ENCODE measurements at regions of chr16 and their contacts with region 1.

Region 1: GRCh38 chr16:57147381-57148221 is 38.2 kb downstream of the PSME3IP1 start:
- DNase-seq: peak in 3 of 5 donors; percentile 43 to 65 (median 47)
- ATAC-seq: peak in 3 of 4 donors; percentile 20 to 71 (median 33)
- H3K4me3 ChIP-seq: peak overlapping the region in 1 of 12 donors; percentile 6
- H3K27ac ChIP-seq: peak overlapping the region in 11 of 12 donors; percentile 27 to 89 (median 68)
- H3K4me1 ChIP-seq: peaks cover 10 to 87% (median 58%) of the 10 kb centered on the region in 12 donors
- H3K27me3 ChIP-seq: no peaks in the 10 kb centered on the region
- CTCF ChIP-seq: no peak
- POLR2A ChIP-seq: no peak

Region 2: DNA sequence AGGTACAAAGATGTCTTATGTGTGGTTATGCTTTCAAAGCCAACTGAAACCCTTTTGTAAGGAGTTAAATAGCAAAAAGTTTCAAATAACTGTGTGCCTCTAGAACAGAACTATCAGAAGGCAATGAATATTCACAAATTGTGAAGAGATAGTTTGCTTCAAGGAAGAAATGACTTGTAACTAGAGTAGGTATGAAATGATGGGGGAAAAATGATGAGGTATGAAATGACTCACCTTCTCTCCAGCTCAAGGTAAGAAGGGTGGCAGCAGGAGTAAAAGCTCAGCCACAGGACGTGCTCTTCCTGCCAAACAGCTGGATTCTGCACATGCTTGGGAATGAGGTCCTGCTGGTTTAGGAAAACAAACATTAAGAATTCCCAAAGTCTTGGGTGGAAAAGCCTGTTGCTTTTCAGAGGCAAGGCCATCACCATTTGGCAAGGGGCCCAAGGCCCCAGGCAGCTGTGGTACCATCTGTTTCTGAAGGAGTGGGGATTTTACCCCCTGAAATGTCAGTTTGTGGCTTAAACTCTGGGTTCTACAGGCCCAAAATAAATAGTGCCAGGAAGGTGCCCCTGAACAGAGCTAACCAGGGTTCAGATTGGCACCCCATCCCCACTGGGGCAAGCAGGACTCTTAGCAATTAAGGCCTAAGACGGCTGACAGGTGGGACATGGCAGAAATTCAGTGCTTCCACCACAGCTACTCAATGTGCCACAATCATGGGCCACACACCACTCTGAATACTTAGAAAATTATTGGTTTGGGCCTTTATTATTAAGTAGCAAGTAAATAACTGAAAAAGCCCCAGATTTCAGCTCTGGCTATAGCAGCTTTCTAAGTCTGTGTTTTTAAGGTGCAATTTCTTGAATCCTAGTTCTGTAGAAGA is 202.4 kb before region 1 on chr16:
- intact Hi-C with region 1: loop called in 1 of 10 experiments (anchors 10 kb)
- DNase-seq: no peak
- ATAC-seq: peak in 1 of 4 donors; percentile 10
- H3K4me3 ChIP-seq: no peak overlapping the region
- H3K27ac ChIP-seq: peak overlapping the region in 1 of 12 donors; percentile 6
- H3K4me1 ChIP-seq: peaks cover 0 to 15% (median 2%) of the 10 kb centered on the region in 12 donors
- H3K27me3 ChIP-seq: no peaks in the 10 kb centered on the region
- CTCF ChIP-seq: no peak
- POLR2A ChIP-seq: no peak

Region 3: DNA sequence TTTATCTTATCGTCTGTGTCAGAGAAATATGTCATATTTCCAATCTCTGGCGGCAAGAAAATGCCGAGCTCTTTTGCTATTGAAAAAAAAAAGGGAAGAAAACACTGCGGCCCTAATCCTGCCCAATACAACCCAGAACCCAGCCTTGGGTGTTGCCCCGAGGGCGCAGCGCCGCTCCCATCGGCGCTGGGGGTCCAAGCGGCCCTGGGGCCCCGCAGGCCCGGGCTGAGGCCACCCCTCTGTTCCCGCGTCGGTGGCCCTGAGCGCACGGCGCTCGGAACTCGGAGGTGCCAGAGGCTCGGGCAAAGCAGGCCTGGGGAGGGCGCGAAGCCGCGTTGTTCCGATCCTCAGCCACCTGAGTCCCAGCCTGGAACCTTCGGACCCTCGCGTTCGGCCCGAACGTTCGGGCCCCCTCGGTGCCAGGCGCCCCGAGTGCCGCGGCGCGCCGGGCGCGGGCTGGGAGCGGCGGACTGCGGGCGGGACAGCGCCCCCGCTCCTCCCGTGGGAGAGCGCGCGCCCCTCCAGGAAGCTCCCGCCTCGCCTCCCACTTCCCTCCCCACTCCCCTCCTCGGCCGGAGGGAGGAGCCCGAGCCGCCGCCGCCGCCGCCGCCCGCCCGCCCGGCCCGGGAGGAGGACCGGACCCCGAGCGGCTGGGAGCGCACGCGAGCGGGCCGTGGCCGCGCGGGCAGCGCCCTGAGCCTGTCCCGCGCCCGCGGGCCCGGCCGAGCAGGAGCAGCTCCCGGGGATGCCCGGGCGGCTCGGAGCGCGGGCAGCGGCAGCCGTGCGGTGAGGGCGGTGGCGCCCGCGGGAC is 55.4 kb before region 1 on chr16 and contains the start of gene CPNE2:
- intact Hi-C with region 1: loop called in 5 of 10 experiments (anchors 5 to 10 kb)
- DNase-seq: peak; percentile 74 to 84 (median 83)
- ATAC-seq: peak; percentile 70 to 91 (median 84)
- H3K4me3 ChIP-seq: peak within 1 kb of the TSS; percentile 66 to 98 (median 88)
- H3K27ac ChIP-seq: peak within 1 kb of the TSS; percentile 82 to 94 (median 84)
- H3K4me1 ChIP-seq: peaks cover 2 to 40% (median 15%) of the 10 kb centered on the region in 12 donors
- H3K27me3 ChIP-seq: no peaks in the 10 kb centered on the region
- CTCF ChIP-seq: peak in 3 of 12 donors; percentile 11 to 36 (median 20)
- POLR2A ChIP-seq: peak in 1 of 2 donors; percentile 65
- total RNA-seq, gene CPNE2: 7.2 to 23.6 (median 11.9) TPM

Region 4: DNA sequence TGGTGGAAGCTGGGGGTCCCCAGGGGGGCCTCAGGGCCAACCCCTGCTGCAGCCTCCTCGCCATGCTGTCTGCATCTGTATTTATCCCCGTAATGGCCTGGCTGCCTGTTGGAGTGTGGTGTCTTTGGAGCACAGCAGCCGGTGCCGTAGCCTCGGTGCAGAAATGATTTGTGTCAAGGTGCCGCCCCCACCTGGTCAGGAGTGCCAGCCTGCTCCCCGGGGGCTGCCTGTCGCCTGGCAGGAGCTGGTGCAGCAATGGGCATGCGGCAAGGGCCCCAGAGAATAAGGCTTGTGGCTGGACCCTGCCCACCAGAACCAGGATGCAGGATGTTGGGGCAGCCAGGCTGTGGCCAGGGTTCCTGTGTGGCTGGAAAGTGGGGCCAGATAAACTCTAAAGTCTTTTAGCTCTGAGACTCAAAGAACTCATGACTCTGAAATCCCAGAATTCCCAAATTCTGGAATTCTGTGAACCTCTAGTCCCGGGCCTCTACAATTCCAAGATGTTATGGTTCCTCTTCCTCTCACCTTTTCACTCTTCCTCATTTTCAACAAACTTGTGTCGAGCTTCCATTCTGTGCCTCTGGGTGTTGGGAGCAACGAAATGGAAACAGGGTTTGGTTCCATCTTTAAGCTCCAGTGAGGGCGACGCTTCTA is 49.3 kb before region 1 on chr16:
- intact Hi-C with region 1: loop called in 5 of 10 experiments (anchors 5 to 10 kb)
- DNase-seq: no peak
- ATAC-seq: no peak
- H3K4me3 ChIP-seq: no peak overlapping the region
- H3K27ac ChIP-seq: no peak overlapping the region
- H3K4me1 ChIP-seq: peaks cover 0 to 46% (median 15%) of the 10 kb centered on the region in 12 donors
- H3K27me3 ChIP-seq: no peaks in the 10 kb centered on the region
- CTCF ChIP-seq: no peak
- POLR2A ChIP-seq: no peak

Measured in heart left ventricle (tissue), 16 donors.